ENCODE measurements at regions of chr21 and their contacts with region 1.

Region 1: DNA sequence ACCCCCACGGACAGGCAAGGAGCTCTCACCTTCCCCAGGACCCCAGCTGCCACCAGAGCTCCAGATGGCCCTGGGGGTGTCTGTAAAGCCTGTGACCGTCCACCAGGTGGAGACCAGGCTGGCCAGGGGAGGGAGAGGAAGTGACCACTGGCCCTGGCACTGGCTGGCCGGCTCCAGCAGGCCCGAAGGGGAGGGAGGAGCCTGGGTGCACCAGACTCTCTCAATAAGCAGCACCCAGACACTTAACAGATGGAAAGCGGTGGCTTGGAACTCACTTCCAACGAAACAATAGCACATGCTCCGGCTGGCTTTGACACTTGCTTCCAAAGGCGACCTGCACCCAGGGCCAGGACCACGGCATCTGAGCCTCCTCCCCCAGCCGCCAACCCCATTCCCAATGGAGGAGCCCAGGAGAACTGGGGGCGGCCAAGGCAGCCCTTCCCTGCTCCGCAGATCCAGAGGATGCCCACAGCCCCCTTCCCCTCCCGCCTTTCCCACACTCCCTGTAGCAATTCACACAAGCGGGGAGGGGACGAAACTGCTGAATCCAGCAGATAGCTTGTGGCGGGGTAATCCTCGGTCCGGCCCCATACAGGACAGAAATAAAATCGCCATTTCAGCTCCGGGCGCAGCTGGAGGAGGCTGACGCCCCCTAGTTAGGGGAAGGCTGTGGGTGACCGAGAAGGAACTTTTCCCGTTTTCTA is 742 bp upstream of the PDE9A start:
- DNase-seq: peak; percentile 79
- ATAC-seq: peak; percentile 69

Region 2: DNA sequence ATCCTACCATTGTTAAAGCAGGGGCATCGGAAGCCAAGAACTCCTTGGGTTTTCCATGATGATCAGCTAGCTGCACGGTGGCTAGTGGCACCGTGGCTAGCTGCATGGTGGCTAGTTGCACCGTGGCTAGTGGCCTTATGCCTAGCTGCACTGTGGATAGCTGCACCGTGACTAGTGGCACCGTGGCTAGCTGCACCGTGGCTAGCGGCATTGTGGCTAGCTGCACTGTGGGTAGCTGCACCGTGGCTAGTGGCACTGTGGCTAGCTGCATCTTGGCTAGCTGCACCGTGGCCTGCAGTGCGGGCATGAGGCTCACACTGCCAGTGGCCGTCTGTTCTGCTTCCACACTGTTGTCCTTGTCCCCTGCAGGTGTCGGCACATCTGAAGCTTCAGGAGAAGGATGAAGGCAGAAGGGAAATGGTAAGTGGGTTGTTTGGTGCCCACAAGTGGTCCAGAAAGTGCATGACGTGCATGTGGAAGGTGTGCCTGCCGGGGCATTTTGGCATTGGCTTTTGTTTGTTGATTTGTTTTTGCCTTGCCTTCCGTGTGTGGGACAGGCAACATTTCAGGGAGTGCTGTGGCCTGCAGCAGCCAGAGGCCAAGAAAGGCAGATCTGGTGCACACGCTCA is 376.0 kb before region 1 on chr21:
- intact Hi-C with region 1: no loop called
- DNase-seq: no peak
- ATAC-seq: no peak

Region 3: DNA sequence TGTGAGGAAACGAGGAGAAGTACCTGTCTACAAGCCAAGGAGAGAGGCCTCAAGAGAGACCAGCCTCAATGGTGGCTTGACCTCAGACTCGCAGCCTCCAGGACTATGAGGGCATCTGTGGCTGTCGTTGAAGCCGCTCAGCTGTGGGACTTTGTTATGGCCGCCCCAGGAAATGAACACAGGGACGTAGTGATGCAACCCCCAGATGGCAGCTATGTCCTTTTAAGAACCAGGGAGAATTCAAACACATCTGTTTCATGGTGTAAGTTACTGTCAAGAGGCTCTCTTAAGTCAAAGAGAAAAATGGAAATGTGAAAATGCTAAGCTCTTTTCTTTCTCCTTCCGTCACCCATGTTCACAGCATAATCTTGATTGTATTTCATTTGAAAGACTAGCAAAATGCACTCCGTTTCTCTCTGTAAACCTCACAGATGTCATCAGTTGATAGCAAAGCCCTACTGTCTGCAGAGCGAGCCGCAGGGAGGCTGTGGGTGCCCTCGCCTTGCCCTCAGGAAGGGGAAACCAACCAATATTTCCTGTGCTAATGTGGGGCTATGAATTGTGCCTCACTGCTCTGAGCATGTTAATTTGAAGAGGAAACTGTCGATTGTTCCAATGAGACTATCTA is 227.7 kb before region 1 on chr21:
- intact Hi-C with region 1: no loop called
- DNase-seq: no peak
- ATAC-seq: no peak

Region 4: GRCh38 chr21:42456457-42456856 is 196.2 kb before region 1 on chr21:
- intact Hi-C with region 1: no loop called
- DNase-seq: no peak
- ATAC-seq: no peak

Region 5: DNA sequence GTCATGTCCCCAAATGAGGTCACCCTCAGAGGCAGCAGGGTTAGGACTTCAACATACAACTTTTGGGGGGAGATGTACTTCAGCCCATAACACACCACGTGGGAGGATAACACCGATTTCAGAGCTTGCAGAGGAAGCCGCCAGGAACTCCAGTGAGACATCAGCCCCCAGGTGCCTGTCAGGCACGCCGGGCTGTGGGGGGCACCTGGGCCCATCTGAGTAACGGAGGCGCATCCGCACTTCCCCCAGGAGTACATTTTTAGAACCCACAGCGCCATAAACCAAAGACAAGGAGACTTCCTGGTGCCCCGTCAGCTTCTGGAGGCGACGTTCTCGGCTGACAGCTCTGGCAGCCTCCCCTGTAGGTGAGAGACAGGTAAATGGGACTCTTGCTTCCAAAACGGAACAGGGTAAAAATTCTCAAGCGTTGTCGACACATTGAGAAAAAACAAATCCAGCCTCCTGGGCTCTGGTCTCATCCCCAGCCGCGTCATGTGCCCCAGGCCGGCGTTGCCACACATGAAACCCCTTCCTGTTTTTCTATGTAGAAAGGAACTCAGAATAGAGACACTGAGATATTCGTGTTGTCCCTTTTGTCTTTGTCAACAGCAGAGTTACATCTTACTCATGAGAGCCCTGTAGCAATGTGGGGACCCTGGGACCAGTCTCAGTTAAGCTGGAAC is 94.1 kb after region 1 on chr21:
- intact Hi-C with region 1: loop called (anchors 10 kb)
- DNase-seq: peak; percentile 78
- ATAC-seq: no peak

Region 6: GRCh38 chr21:42818328-42818749 is 165.7 kb after region 1 on chr21:
- intact Hi-C with region 1: loop called (anchors 5 kb)
- DNase-seq: peak; percentile 76
- ATAC-seq: peak; percentile 79

Region 7: DNA sequence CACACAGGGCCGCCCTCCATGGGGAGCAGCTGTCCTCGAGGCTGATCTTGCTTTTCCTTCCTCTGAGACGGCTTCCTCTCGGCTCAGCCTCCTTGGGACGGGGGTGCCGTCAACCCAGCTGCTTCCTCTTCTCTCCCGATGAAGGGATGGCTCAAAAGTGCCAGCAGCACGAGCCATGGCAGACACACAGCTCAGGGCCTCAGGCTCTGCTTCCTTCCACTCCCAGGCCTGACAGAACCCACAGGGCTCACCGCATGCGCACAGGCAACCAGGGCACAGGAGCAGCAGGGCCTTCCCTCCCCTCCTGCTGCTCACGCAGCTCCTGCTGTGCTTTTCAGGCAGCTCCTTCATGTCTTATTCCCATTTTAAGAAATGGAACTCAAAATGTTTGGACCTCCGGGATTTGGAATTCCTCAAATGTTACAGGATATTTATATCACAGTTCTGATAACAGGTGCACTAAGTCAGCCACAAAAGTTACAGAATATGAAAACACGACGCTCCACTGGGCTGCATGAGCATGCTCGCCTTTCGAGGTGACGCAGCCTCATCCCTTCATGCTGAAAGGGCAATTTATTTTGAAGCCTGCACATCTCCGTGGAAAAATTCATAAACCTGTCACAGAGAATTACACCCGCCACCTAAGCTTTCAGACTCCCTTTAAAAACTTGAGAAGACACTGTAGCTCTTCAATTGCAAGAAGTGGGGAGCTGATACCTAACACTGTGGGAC is 922.2 kb after region 1 on chr21:
- intact Hi-C with region 1: no loop called
- DNase-seq: peak; percentile 70
- ATAC-seq: peak; percentile 69